Endothelial cell of umbilical vein (primary cell): ENCODE measurements at regions of chr18 and their contacts with region 1.

Region 1: DNA sequence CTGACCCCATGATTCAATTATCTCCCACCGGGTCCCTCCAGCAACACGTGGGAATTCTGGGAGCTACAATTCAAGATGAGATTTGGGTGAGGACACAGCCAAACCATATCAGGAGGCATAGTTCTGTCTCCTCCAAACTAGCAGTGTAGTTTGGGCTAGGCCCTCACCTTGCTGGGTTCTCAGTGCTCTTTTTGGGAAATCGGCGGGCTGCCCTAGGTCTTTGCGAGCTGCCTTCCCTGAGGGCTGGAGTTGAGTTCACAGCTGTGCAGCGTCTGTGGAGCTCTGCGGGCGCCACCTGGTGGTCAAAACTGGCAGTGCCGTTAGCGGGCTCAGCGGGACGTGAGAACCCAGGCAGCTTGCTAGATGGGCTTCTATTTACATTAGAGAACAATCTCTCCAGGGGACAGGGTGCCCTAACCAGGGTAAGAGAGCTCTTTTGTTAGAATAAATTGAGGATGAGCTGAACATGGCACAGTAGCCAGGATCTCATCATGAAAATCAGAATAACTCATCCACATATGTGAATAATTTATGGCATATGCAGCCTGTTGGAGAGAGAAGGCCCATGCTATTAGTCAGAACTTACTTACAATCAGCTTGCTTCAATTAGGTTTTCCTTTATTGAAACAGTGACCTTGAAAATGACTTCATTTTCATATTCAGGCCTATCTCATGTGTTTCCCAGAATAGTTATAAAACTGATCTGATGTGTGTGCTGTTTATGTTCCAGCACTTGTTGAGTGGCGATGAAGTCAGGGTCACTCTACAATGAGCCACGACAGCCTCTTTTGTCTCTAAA is 27.4 kb upstream of the YES1 start:
- DNase-seq: peak; percentile 87
- H3K4me3 ChIP-seq: no peak overlapping the region
- H3K27ac ChIP-seq: no peak overlapping the region
- H3K4me1 ChIP-seq: peaks cover 25% of the 10 kb centered on the region
- H3K27me3 ChIP-seq: no peaks in the 10 kb centered on the region
- CTCF ChIP-seq: peak; percentile 96 to 98
- POLR2A ChIP-seq: no peak

Region 2: GRCh38 chr18:427005-427404 is 412.4 kb before region 1 on chr18:
- CTCF ChIA-PET with region 1: no interaction called
- POLR2A ChIA-PET with region 1: no interaction called
- dilution Hi-C with region 1: no loop called
- intact Hi-C with region 1: loop called (anchors 10 kb)
- DNase-seq: no peak
- H3K4me3 ChIP-seq: no peak overlapping the region
- H3K27ac ChIP-seq: no peak overlapping the region
- H3K4me1 ChIP-seq: peaks cover 23% of the 10 kb centered on the region
- H3K27me3 ChIP-seq: no peaks in the 10 kb centered on the region
- CTCF ChIP-seq: no peak
- POLR2A ChIP-seq: no peak

Region 3: DNA sequence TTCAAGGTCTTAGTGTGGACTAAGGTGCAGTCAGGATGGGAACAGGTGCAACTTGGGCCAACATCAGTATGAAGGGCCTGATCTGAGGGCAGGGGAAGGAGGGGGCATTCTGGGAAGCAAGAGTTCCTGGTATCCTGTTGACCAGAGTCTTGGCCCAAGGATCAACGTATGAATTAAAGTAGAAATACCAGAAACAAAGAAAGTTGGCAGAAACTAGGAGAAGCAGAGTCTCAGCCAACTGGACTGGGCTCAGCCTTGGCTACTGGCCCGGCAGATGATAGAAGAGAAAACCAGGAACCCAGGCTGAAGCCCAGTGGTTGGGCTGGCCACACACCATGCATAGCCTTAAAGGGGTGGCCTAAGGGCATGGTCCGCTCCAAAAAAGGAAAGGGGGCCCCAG is 257.0 kb before region 1 on chr18:
- CTCF ChIA-PET with region 1: no interaction called
- POLR2A ChIA-PET with region 1: no interaction called
- dilution Hi-C with region 1: no loop called
- intact Hi-C with region 1: no loop called
- DNase-seq: no peak
- H3K4me3 ChIP-seq: no peak overlapping the region
- H3K27ac ChIP-seq: no peak overlapping the region
- H3K4me1 ChIP-seq: no peaks in the 10 kb centered on the region
- H3K27me3 ChIP-seq: peaks cover 0 to 2% of the 10 kb centered on the region in 2 experiments
- CTCF ChIP-seq: no peak
- POLR2A ChIP-seq: no peak

Region 4: GRCh38 chr18:629269-630150 is 209.9 kb before region 1 on chr18:
- CTCF ChIA-PET with region 1: interaction called, 652 read pairs
- POLR2A ChIA-PET with region 1: no interaction called
- dilution Hi-C with region 1: no loop called
- intact Hi-C with region 1: loop called (anchors 1 kb)
- DNase-seq: no peak
- H3K4me3 ChIP-seq: no peak overlapping the region
- H3K27ac ChIP-seq: no peak overlapping the region
- H3K4me1 ChIP-seq: peaks cover 1% of the 10 kb centered on the region
- H3K27me3 ChIP-seq: peaks cover 0 to 2% of the 10 kb centered on the region in 2 experiments
- CTCF ChIP-seq: peak in 1 of 2 donors; percentile 4
- POLR2A ChIP-seq: no peak

Region 5: GRCh38 chr18:712401-713134 is 126.9 kb before region 1 on chr18 and contains the start of gene ENOSF1:
- CTCF ChIA-PET with region 1: interaction called, 33 read pairs
- POLR2A ChIA-PET with region 1: no interaction called
- dilution Hi-C with region 1: no loop called
- intact Hi-C with region 1: loop called (anchors 1 kb)
- DNase-seq: peak; percentile 84
- H3K4me3 ChIP-seq: peak within 1 kb of the TSS; percentile 74 to 84 (median 82)
- H3K27ac ChIP-seq: peak within 1 kb of the TSS; percentile 49
- H3K4me1 ChIP-seq: peaks cover 5% of the 10 kb centered on the region
- H3K27me3 ChIP-seq: no peaks in the 10 kb centered on the region
- CTCF ChIP-seq: peak; percentile 72 to 92
- POLR2A ChIP-seq: peak; percentile 51
- total RNA-seq, gene ENOSF1: 50.5 and 52.5 TPM in 2 replicates

Region 6: GRCh38 chr18:741931-742512 is 97.4 kb before region 1 on chr18:
- CTCF ChIA-PET with region 1: interaction called, 301 read pairs
- POLR2A ChIA-PET with region 1: no interaction called
- dilution Hi-C with region 1: loop called (anchors 25 kb)
- intact Hi-C with region 1: loop called (anchors 1 kb)
- DNase-seq: peak; percentile 78
- H3K4me3 ChIP-seq: no peak overlapping the region
- H3K27ac ChIP-seq: peak overlapping the region; percentile 9
- H3K4me1 ChIP-seq: peaks cover 19% of the 10 kb centered on the region
- H3K27me3 ChIP-seq: no peaks in the 10 kb centered on the region
- CTCF ChIP-seq: peak; percentile 46 to 51
- POLR2A ChIP-seq: no peak

Region 7: DNA sequence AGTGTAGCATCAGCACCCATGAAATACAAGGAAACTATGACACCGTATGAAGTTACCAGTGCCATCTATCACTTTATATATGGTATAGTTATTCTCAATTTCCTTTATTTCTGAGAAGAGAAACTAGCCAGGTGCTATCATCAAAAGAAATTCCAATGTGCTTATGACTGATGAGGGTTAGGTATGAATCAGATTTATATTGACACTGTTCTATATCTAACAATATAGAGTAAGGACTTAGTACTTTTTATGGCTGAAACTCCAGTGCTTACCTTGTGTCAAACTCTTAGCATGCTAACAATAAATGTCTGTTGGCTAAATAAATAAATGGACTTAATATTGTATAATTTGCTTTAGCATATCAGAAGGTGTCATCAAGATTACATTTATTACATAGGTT is 1725.0 kb after region 1 on chr18:
- CTCF ChIA-PET with region 1: no interaction called
- POLR2A ChIA-PET with region 1: no interaction called
- dilution Hi-C with region 1: no loop called
- intact Hi-C with region 1: no loop called
- DNase-seq: no peak
- H3K4me3 ChIP-seq: no peak overlapping the region
- H3K27ac ChIP-seq: no peak overlapping the region
- H3K4me1 ChIP-seq: no peaks in the 10 kb centered on the region
- H3K27me3 ChIP-seq: no peaks in the 10 kb centered on the region
- CTCF ChIP-seq: no peak
- POLR2A ChIP-seq: no peak